B cell (primary cell): ENCODE measurements at regions of chr13 and their contacts with region 1.

Region 1: DNA sequence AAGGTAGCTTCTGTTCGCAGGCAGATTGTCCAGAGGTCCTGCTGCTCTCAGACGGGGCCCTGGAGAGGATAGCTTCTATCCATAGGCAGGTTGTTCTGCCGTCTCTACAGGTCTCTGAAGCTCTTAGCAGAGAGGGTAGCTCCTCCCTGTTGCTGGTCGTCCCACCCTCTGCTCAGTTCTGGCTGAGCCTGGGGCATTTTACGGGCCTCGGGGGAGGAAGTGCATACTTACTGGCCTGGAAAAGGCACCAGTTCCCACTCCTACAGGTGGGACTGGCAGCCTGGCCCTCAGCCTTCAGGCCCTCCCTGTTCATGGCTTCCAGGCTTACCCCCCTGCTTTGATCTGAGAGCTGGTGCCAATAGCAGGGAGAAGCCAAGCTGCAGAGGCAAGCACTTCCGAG is 42.3 kb downstream of the USPL1 start:
- DNase-seq: no peak
- ATAC-seq: no peak
- H3K4me3 ChIP-seq: peak overlapping the region in 4 of 5 experiments; percentile 14 to 50 (median 34)
- H3K4me3 Mint-ChIP-seq: peak overlapping the region; percentile 83
- H3K27ac ChIP-seq: peak overlapping the region; percentile 78 to 83
- H3K27ac Mint-ChIP-seq: peak overlapping the region; percentile 97
- H3K4me1 ChIP-seq: peaks cover 56 to 60% of the 10 kb centered on the region in 2 donors
- H3K4me1 Mint-ChIP-seq: peaks cover 24% of the 10 kb centered on the region
- H3K27me3 ChIP-seq: no peaks in the 10 kb centered on the region
- H3K27me3 Mint-ChIP-seq: no peaks in the 10 kb centered on the region
- CTCF ChIP-seq: no peak

Region 2: GRCh38 chr13:30629527-30629926 is 30.5 kb before region 1 on chr13:
- CTCF ChIA-PET with region 1: no interaction called
- POLR2A ChIA-PET with region 1: interaction called, 7 read pairs
- intact Hi-C with region 1: loop called (anchors 2 kb)
- DNase-seq: no peak
- ATAC-seq: no peak
- H3K4me3 ChIP-seq: no peak overlapping the region
- H3K4me3 Mint-ChIP-seq: no peak overlapping the region
- H3K27ac ChIP-seq: peak overlapping the region in 1 of 2 donors; percentile 35
- H3K27ac Mint-ChIP-seq: peak overlapping the region; percentile 70
- H3K4me1 ChIP-seq: peaks cover 16 to 21% of the 10 kb centered on the region in 2 donors
- H3K4me1 Mint-ChIP-seq: peaks cover 46% of the 10 kb centered on the region
- H3K27me3 ChIP-seq: no peaks in the 10 kb centered on the region
- H3K27me3 Mint-ChIP-seq: no peaks in the 10 kb centered on the region
- CTCF ChIP-seq: no peak

Region 3: DNA sequence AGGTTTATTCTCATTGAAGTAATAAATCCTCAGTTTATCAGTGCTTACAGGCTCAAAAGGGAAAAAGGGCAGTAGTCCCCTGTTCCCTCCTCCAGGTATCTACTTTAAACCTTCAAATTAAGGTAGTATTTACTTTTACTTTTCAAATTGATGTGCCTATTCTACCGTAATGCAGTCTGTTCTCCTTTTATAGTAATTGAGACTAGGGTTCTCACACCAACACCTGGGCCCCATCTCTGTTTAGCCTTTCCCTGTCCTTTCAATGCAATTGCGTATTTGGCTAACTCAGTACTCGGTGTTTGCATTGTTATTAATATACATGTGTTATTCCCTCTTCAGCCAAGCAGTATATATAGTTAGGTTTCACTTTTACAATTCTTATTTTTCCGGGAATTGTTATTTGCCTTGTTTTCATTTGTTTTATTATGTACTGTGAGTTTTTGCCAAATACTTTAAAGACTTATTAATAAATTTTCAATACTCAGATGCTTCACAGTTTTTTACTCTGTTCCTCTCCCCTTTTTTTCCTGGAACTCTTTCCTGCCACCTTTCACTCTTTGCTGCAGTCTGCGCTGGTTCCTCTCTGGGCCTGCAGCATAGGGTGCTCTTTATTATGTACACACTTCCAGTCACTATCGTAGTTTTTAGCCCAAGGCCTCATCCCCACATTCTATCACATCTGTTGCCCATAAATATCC is 12.0 kb before region 1 on chr13:
- CTCF ChIA-PET with region 1: interaction called, 6 read pairs
- POLR2A ChIA-PET with region 1: no interaction called
- intact Hi-C with region 1: loop called (anchors 2 kb)
- DNase-seq: peak; percentile 31
- ATAC-seq: peak; percentile 51
- H3K4me3 ChIP-seq: peak overlapping the region in 1 of 5 experiments; percentile 8
- H3K4me3 Mint-ChIP-seq: peak overlapping the region; percentile 70
- H3K27ac ChIP-seq: peak overlapping the region; percentile 54 to 79
- H3K27ac Mint-ChIP-seq: peak overlapping the region; percentile 87
- H3K4me1 ChIP-seq: peaks cover 19% of the 10 kb centered on the region in 2 donors
- H3K4me1 Mint-ChIP-seq: peaks cover 39% of the 10 kb centered on the region
- H3K27me3 ChIP-seq: no peaks in the 10 kb centered on the region
- H3K27me3 Mint-ChIP-seq: no peaks in the 10 kb centered on the region
- CTCF ChIP-seq: no peak

Region 4: DNA sequence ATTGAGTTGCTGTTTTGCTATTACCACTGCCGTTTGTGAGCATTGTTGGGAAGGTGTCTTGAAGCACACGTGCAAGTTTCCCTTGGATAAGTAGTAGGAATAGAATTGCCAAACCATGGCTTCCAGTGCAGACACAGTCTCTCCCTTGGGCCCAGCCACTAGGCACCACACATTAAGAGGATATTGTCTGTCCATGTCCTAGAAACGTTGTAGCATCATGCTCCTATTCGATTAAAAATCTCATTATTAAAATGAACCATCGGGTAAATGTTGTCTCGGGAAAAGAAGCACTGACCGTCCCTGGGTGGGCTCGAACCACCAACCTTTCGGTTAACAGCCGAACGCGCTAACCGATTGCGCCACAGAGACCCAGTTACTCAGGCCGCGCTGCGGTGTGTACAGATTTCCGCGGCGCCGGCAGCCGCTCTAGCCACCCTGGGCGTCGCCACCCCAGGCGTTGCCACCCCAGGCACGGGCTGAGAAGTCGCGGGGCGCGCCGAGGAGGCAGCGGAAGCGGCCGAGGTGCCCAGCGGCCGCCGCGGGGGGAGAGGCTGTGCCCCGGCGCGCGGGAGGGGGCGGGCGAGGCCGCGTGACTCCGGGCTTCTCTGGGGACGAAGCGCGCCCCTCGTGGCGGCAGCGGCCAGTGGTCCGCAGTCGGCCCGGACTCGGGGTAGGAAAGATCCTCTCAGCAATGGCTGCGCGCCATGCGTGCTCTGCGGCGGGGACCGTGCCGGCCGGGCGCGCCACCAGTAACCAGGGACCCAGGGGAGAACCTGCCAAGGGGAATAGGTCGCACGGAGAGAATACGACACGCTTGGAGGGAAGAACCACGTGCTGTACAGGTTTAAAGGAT is 13.9 kb after region 1 on chr13:
- CTCF ChIA-PET with region 1: interaction called, 6 read pairs
- POLR2A ChIA-PET with region 1: no interaction called
- intact Hi-C with region 1: loop called (anchors 1 kb)
- DNase-seq: peak; percentile 97
- ATAC-seq: peak; percentile 92
- H3K4me3 ChIP-seq: peak overlapping the region; percentile 52 to 73 (median 65)
- H3K4me3 Mint-ChIP-seq: peak overlapping the region; percentile 97
- H3K27ac ChIP-seq: peak overlapping the region; percentile 47 to 57
- H3K27ac Mint-ChIP-seq: peak overlapping the region; percentile 99
- H3K4me1 ChIP-seq: peaks cover 8 to 19% of the 10 kb centered on the region in 2 donors
- H3K4me1 Mint-ChIP-seq: peaks cover 30% of the 10 kb centered on the region
- H3K27me3 ChIP-seq: no peaks in the 10 kb centered on the region
- H3K27me3 Mint-ChIP-seq: no peaks in the 10 kb centered on the region
- CTCF ChIP-seq: peak; percentile 73